ENCODE measurements at regions of chr16 and their contacts with region 1.

Region 1: GRCh38 chr16:68284847-68285246 is 20.5 kb downstream of the SLC7A6 start:
- H3K4me3 ChIP-seq: no peak overlapping the region
- H3K27ac ChIP-seq: no peak overlapping the region
- H3K4me1 ChIP-seq: no peaks in the 10 kb centered on the region
- CTCF ChIP-seq: no peak

Region 2: DNA sequence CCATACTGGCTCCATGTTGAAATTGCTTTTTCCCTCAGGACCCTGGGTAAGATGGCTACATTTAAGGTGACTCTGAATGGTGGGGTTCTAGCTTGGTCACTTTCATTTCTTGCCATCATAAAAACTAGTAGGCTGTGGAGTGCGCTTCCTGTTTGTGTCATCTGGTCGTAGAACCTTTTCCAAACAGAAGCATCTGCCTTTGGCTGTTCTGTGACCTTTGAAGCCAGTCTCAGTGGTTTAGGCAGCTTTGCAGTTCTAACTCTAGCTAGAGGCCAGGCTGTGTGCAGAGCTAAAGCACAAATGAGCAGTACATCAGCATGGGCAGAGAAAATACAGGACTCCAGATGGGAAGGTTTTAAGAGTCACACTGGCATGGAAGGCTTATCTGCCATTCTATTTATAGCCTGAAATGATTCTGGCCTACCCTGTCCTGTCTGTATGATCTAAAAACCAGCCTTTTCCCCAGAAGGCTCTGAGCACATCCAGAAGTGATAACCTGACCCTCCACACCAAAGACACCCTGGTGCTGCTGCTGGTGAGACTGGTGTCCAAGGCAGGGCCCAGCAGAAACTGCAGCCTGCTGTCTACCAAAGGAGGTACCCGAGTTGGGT is 57.6 kb before region 1 on chr16:
- CTCF ChIA-PET with region 1: no interaction called
- POLR2A ChIA-PET with region 1: no interaction called
- H3K4me3 ChIP-seq: no peak overlapping the region
- H3K27ac ChIP-seq: no peak overlapping the region
- H3K4me1 ChIP-seq: no peaks in the 10 kb centered on the region
- CTCF ChIP-seq: no peak

Region 3: GRCh38 chr16:68259007-68259825 is 25.6 kb before region 1 on chr16:
- CTCF ChIA-PET with region 1: interaction called, 14 read pairs
- POLR2A ChIA-PET with region 1: interaction called, 3 read pairs
- H3K4me3 ChIP-seq: no peak overlapping the region
- H3K27ac ChIP-seq: no peak overlapping the region
- H3K4me1 ChIP-seq: no peaks in the 10 kb centered on the region
- CTCF ChIP-seq: no peak

Measured in HEK293 (cell line).